ENCODE measurements at regions of chr2 and their contacts with region 1.

Region 1: DNA sequence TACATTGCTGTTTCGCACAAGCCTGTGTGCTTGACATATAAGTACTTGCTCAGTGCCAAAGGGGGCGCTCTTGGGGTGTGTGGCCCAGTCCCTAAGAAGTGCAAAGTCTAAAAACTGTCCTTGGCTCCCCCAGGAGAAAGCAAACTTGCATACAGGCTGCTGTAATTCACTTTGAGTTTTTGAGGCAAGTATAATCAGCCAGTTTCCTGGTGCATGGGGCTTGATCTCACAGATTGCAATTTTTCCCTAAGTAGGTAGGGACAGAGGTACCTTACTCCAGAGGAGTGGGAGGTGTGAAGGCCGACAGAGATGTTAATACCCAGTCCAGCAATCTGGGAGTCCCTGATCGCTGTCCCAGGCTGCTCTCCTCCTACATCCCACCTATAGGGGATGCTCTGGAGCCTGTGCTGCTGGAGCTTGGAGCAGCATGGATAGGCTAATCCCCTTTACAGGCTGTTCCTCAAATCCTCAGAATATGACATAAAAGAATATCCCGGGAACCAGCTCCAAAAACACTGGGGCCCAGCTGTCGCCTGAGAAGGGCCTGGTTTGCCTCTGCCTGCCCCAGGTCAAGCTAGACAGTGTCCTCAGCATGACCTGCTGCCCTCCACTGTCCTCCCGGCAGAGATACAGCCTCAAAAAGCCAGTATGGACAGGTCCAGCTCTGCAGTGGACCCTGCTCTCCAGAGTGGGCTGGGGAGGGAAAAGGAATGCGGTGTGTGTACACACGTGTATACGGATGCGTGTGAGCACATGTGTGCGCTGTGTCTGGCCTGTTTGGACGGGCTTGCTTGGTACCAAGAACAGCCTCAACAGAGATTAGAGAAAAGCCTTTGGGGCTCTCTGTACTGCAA is 136.5 kb upstream of the HAAO start:
- DNase-seq: peak; percentile 62
- H3K4me3 ChIP-seq: no peak overlapping the region
- H3K27ac ChIP-seq: peak overlapping the region; percentile 49
- H3K4me1 ChIP-seq: peaks cover 51% of the 10 kb centered on the region
- H3K27me3 ChIP-seq: no peaks in the 10 kb centered on the region
- CTCF ChIP-seq: peak; percentile 31 to 49
- POLR2A ChIP-seq: no peak

Region 2: DNA sequence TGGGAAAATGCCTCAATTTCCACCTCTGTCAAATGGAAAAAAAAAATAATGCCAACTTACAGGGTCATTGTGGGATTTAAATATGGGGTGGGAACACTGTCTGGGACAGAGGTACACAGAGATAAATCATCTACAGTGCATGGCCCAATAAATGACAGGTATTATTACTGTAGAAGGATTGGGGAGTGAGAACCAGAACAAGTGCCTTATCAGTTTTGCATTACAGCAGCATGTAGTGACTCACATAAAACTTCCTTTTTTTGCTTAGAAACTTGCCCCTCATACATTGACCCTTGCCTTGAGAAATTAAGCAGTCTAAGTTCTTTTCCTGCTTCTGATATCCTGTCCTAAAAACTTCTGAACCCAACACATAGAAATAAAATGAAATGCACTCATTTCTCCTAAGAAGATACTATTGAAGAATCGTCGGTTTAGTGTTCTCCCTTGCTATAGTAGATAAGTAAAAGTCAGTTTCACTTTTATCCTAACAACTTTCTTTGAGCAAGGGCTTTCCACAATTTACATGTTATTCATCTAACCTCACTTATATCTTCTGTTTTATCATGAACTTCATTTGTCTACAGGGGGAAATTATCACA is 15.5 kb before region 1 on chr2:
- CTCF ChIA-PET with region 1: interaction called, 7 read pairs
- POLR2A ChIA-PET with region 1: no interaction called
- dilution Hi-C with region 1: no loop called
- intact Hi-C with region 1: loop called (anchors 1 kb)
- DNase-seq: peak; percentile 95
- H3K4me3 ChIP-seq: no peak overlapping the region
- H3K27ac ChIP-seq: peak overlapping the region; percentile 54
- H3K4me1 ChIP-seq: peaks cover 42% of the 10 kb centered on the region
- H3K27me3 ChIP-seq: no peaks in the 10 kb centered on the region
- CTCF ChIP-seq: no peak
- POLR2A ChIP-seq: peak; percentile 70